AG04449 (cell line): ENCODE measurements at regions of chr14 and their contacts with region 1.

Region 1: GRCh38 chr14:54566410-54567223 is at the start of gene SAMD4A:
- DNase-seq: no peak
- H3K4me3 ChIP-seq: peak within 1 kb of the TSS; percentile 76
- CTCF ChIP-seq: peak; percentile 47

Region 2: GRCh38 chr14:54322676-54323337 is 243.8 kb before region 1 on chr14:
- CTCF ChIA-PET with region 1: no interaction called
- POLR2A ChIA-PET with region 1: no interaction called
- DNase-seq: no peak
- H3K4me3 ChIP-seq: no peak overlapping the region
- CTCF ChIP-seq: no peak

Region 3: DNA sequence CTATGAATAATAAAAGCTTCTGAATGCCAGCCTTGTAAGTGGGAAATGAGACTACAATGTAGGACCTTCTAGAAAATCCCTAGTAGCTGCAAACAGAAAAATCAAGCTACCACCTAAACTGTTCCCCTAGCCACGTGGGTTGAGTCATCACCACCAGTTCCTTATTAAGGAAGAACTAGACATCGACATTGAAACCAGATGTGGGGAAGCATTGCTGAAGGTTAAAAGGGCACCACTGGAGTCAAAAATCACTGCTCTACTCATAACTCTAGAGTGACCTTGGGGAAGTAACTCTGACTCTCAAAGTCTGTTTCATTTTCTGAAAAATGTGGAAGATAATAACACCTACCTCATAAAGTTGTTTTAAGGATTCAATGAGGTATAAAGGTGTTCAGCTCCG is 116.1 kb before region 1 on chr14:
- CTCF ChIA-PET with region 1: no interaction called
- POLR2A ChIA-PET with region 1: no interaction called
- DNase-seq: no peak
- H3K4me3 ChIP-seq: no peak overlapping the region
- CTCF ChIP-seq: no peak

Region 4: DNA sequence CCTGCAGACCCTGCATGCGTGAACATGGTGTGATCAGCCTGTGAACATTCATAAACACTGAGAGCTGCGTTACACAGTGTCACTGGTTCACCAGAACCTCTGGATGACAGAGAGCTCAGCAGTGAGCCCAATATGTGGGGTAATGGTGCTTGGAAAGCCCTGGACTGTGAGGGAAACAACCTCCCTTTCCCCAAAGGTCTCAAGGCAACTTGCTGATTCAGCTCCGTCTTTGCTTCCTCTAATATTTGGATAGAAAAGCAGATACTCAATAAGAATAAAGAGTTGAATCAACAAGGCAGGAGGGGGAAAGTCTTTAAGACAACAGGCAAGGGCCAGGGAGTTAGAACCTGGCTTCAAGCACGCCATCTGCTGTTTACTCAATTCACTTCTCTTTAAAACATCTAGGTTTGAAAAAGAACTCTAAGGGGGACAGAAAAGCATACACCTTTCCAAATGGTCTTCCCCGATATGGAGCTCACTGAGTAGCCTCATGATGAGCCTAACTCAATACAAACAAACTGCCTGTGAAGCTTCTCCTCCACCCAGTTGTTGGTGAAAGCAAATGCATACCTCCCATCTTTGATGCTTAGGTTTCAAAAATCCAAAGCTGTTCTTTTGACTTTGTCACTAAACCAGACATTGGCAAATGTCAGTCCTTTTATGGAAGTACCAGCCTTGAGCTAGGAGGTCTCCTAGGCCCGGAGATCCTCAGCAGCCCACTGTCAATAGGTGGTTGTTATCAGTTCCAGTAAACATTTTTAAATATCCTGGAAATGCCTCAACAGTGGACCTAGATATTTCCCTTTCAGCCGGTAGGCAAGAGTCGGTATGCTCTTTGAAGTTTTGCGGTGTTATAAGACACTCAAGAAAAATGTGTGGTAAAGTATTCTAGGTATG is 76.4 kb after region 1 on chr14:
- CTCF ChIA-PET with region 1: interaction called, 22 read pairs
- POLR2A ChIA-PET with region 1: interaction called, 3 read pairs
- DNase-seq: no peak
- H3K4me3 ChIP-seq: no peak overlapping the region
- CTCF ChIP-seq: peak; percentile 7

Region 5: GRCh38 chr14:54691525-54692283 is 125.1 kb after region 1 on chr14:
- CTCF ChIA-PET with region 1: interaction called, 168 read pairs
- POLR2A ChIA-PET with region 1: interaction called, 34 read pairs
- DNase-seq: no peak
- H3K4me3 ChIP-seq: no peak overlapping the region
- CTCF ChIP-seq: peak; percentile 94

Region 6: GRCh38 chr14:54747616-54748015 is 181.0 kb after region 1 on chr14:
- CTCF ChIA-PET with region 1: interaction called, 13 read pairs
- POLR2A ChIA-PET with region 1: no interaction called
- DNase-seq: no peak
- H3K4me3 ChIP-seq: no peak overlapping the region
- CTCF ChIP-seq: no peak

Region 7: GRCh38 chr14:54805521-54806322 is 239.1 kb after region 1 on chr14:
- CTCF ChIA-PET with region 1: interaction called, 88 read pairs
- POLR2A ChIA-PET with region 1: interaction called, 10 read pairs
- DNase-seq: peak; percentile 5
- H3K4me3 ChIP-seq: no peak overlapping the region; the same call in 1 of the 2 replicates
- CTCF ChIP-seq: peak; percentile 92